ENCODE measurements at regions of chr11 and their contacts with region 1.

Region 1: GRCh38 chr11:56841210-56841810 is 92.8 kb upstream of the OR9G4 start:
- DNase-seq: peak; percentile 38
- H3K4me3 ChIP-seq: no peak overlapping the region
- H3K27ac ChIP-seq: no peak overlapping the region
- H3K4me1 ChIP-seq: peaks cover 4% of the 10 kb centered on the region
- H3K27me3 ChIP-seq: no peaks in the 10 kb centered on the region
- CTCF ChIP-seq: peak; percentile 64 to 76 (median 74)

Region 2: GRCh38 chr11:57085611-57086010 is 244.3 kb after region 1 on chr11:
- dilution Hi-C with region 1: loop called (anchors 25 kb)
- DNase-seq: no peak
- H3K4me3 ChIP-seq: no peak overlapping the region
- H3K27ac ChIP-seq: no peak overlapping the region
- H3K4me1 ChIP-seq: peaks cover 2% of the 10 kb centered on the region
- H3K27me3 ChIP-seq: peaks cover 2% of the 10 kb centered on the region
- CTCF ChIP-seq: peak in 1 of 3 experiments; percentile 12

Region 3: DNA sequence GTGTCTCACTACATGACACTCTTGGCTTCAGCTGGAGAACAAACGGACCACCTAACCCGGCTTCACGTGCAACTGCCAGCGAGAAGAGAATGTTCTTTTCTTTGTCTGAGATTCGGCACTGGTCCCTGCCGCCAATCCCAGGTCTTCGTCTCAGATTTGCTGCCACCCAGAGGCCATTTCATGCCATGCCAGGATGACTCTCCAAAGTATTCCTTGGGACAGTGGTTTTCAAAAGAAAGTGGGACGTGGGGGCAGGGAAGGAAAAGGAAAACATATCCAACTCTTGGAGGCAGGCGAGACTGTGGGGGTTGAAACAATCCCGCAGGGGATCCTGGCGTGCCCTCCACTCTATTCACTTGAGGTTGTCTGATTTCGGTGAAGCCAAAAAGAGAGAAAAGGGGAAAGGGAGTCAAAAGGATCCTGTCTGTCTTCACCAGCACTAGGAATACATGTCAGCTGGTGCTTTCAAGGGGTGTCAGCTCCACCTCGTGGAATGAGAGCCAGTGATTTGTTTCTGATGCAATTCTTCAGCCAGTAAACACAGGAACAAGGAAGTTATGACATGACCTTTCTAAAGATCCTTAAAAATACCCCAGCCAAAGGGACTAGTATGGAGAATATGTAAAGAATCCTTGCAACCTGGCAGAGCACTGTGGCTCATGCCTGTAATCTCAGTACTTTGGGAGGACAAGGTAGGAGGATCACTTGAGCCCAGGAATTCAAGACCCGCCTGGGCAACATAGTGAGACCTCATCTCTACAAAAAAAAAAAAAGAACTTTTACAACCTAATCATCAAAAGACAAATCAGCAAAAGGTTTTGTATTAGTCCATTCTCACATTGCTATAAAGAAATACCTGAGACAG is 436.8 kb after region 1 on chr11:
- dilution Hi-C with region 1: loop called (anchors 25 kb)
- DNase-seq: no peak
- H3K4me3 ChIP-seq: no peak overlapping the region
- H3K27ac ChIP-seq: peak overlapping the region; percentile 65
- H3K4me1 ChIP-seq: peaks cover 40% of the 10 kb centered on the region
- H3K27me3 ChIP-seq: no peaks in the 10 kb centered on the region
- CTCF ChIP-seq: peak; percentile 68 to 94 (median 77)

Measured in keratinocyte (primary cell).